Activated naive CD4-positive, alpha-beta T cell treated with anti-CD3 and anti-CD28 coated beads for 36 hours (primary cell): ENCODE measurements at regions of chr3 and their contacts with region 1.

Region 1: DNA sequence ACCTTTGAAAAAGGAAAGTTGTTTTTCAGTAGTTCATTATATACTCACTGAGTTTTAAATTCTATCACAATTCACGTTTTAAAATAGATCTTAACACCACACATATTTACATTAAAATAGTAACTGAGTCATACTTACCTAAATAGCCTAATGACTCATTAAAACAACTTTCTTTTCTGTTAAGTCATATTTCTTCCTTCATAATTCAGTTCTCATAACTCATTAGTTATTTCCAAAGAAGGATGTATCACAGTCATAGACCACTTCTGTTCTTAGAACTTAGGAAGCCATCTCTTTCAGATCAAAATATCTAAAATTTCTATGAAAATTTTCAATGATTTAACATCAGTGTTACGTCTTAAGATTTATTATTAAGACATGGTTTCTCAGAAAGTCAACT is 885.9 kb downstream of the FHIT start:
- DNase-seq: no peak
- H3K4me3 Mint-ChIP-seq: no peak overlapping the region
- H3K27ac Mint-ChIP-seq: no peak overlapping the region
- H3K4me1 Mint-ChIP-seq: peaks cover 28% of the 10 kb centered on the region
- H3K27me3 Mint-ChIP-seq: peaks cover 2% of the 10 kb centered on the region

Region 2: GRCh38 chr3:59866076-59866475 is 499.3 kb before region 1 on chr3:
- CTCF ChIA-PET with region 1: no interaction called
- intact Hi-C with region 1: loop called (anchors 1 kb)
- DNase-seq: no peak
- H3K4me3 Mint-ChIP-seq: no peak overlapping the region
- H3K27ac Mint-ChIP-seq: no peak overlapping the region
- H3K4me1 Mint-ChIP-seq: peaks cover 59% of the 10 kb centered on the region
- H3K27me3 Mint-ChIP-seq: no peaks in the 10 kb centered on the region

Region 3: GRCh38 chr3:60101621-60102020 is 263.7 kb before region 1 on chr3:
- CTCF ChIA-PET with region 1: no interaction called
- intact Hi-C with region 1: no loop called
- DNase-seq: no peak
- H3K4me3 Mint-ChIP-seq: no peak overlapping the region
- H3K27ac Mint-ChIP-seq: no peak overlapping the region
- H3K4me1 Mint-ChIP-seq: peaks cover 31% of the 10 kb centered on the region
- H3K27me3 Mint-ChIP-seq: no peaks in the 10 kb centered on the region

Region 4: GRCh38 chr3:60192297-60193114 is 172.9 kb before region 1 on chr3:
- CTCF ChIA-PET with region 1: no interaction called
- intact Hi-C with region 1: loop called (anchors 5 kb)
- DNase-seq: peak; percentile 58
- H3K4me3 Mint-ChIP-seq: no peak overlapping the region
- H3K27ac Mint-ChIP-seq: no peak overlapping the region
- H3K4me1 Mint-ChIP-seq: peaks cover 28% of the 10 kb centered on the region
- H3K27me3 Mint-ChIP-seq: no peaks in the 10 kb centered on the region

Region 5: DNA sequence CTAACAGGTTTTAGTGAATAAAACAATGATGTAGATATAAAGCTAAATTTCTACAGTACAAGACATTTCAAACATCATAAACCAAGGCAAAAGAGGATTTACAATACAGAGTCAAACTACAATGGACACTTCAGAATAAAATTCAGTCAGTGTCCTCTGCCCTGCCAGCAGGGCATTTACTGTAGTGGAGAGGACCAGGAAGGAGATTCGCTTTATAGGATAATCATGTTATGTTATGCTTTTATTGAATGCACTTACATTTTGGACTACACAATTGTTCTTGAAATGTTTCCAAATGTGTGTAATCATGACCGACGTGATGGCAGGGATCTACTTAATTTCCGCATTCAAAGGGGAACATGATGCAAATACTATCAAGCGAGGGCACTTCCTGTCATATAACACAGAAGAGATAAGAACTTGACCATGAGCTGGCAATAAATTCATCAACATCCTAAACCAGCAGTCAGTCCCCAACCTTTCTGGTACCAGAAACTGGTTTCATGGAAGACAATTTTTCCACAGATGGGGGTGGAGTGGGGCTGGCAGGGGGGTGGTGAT is 39.7 kb before region 1 on chr3:
- CTCF ChIA-PET with region 1: no interaction called
- intact Hi-C with region 1: no loop called
- DNase-seq: no peak
- H3K4me3 Mint-ChIP-seq: no peak overlapping the region
- H3K27ac Mint-ChIP-seq: no peak overlapping the region
- H3K4me1 Mint-ChIP-seq: no peaks in the 10 kb centered on the region
- H3K27me3 Mint-ChIP-seq: no peaks in the 10 kb centered on the region

Region 6: DNA sequence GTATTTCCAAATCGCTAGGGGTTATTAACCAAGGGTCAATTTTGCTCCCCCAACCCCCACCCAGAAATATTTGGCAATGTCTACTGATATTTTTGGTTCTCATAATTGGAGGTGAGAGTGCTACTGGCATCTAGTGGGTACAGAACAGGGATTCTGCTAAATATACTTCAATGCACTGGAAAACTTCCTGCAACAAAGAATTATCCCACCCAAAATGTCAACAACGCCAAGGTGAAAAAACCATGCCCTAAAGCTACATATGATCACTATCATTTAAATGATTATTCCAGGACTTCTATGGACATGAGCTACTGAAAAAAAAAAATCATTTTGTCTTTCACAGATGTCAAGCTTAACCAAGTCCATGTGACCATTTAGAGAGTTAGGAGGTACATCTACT is 18.0 kb after region 1 on chr3:
- CTCF ChIA-PET with region 1: no interaction called
- intact Hi-C with region 1: loop called (anchors 2 kb)
- DNase-seq: no peak
- H3K4me3 Mint-ChIP-seq: no peak overlapping the region
- H3K27ac Mint-ChIP-seq: no peak overlapping the region
- H3K4me1 Mint-ChIP-seq: no peaks in the 10 kb centered on the region
- H3K27me3 Mint-ChIP-seq: no peaks in the 10 kb centered on the region

Region 7: DNA sequence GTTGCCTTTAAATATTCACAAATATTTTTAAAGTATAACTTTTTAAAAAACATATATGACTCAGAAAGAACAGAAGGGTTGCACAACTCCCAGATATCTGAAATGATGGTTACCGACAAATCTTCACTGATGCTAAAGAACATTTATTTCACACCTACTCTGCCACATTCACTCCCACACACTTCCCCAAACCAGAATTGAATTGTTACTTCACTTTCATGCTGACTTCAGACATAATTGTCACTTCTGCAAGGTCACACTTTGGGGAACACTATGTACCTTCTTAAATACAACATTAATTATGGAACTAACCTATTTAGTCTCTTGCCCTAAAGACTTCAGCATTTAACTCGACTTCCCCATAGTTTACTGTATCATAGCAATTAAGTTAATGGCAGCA is 90.8 kb after region 1 on chr3:
- CTCF ChIA-PET with region 1: no interaction called
- intact Hi-C with region 1: loop called (anchors 1 kb)
- DNase-seq: peak; percentile 20
- H3K4me3 Mint-ChIP-seq: no peak overlapping the region
- H3K27ac Mint-ChIP-seq: no peak overlapping the region
- H3K4me1 Mint-ChIP-seq: peaks cover 15% of the 10 kb centered on the region
- H3K27me3 Mint-ChIP-seq: no peaks in the 10 kb centered on the region